GM10248 (cell line): ENCODE measurements at regions of chr9 and their contacts with region 1.

Region 1: DNA sequence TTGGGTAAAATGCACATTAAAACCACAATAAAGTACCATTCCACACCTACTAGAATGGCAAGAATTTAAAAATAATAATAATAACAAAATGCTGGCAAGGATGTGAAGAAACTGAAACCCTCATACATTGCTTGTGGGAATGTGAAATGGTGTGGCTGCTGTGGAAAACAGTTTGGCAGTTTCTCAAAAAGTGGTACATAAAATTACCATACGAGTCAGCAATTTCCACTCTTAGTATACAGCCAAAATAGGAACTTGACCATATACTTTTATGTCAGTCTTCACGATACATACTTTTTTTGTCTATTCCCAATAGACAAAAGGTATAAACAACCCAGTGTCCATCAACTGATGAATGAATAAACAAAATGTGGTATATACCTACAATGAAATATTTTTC is 15.6 kb downstream of the FKBP15 start:
- DNase-seq: no peak
- CTCF ChIP-seq: no peak

Region 2: GRCh38 chr9:113221003-113221799 is 15.8 kb after region 1 on chr9 and contains the starts of genes FKBP15 and SLC31A1:
- CTCF ChIA-PET with region 1: interaction called, 21 read pairs
- POLR2A ChIA-PET with region 1: interaction called, 4 read pairs
- DNase-seq: peak; percentile 97
- CTCF ChIP-seq: no peak